Posterior vena cava (tissue), 2 donors: ENCODE measurements at regions of chr2 and their contacts with region 1.

Region 1: DNA sequence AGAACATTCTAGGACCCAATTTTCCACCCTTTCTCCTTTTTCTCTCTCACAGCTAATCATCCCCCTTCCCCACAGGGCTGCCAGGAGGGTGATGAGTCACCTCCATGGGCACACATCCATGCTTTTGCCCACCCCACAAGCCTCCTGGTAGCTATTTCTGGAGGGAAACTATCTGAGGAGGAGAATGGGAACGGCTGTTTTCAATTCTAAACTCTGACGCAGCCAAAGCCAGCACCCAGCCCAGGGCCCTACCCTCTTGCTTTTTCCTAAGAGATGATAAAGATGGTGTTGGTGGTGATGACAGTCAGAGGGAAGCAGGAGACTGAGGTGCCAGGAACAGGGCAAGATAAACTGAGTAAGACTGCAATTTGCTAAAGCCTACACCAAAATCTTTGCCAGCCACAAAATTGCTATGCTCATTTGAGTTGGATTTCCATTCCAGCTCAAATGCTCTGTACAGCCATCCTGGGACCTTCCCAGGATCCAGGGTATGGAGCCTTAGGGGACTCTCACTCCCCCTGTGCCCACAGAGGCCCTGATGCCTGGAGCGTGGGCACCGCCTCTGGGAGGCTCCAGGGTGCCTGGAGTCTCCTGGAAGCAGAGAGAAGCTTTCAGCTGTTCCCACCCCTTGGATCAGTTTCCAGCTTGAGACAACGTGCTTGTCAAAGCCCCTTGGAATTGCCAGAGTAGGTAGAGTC is 62.0 kb upstream of the FZD7 start:
- DNase-seq: no peak

Region 2: GRCh38 chr2:201807452-201807999 is 164.2 kb before region 1 on chr2:
- intact Hi-C with region 1: loop called in 1 of 2 experiments (anchors 5 kb)
- DNase-seq: peak; percentile 84